ENCODE measurements at regions of chr2 and their contacts with region 1.

Region 1: GRCh38 chr2:191555092-191555742 is 122.7 kb upstream of the NABP1 start:
- DNase-seq: peak; percentile 88
- H3K4me3 Mint-ChIP-seq: no peak overlapping the region
- H3K27ac Mint-ChIP-seq: no peak overlapping the region
- H3K4me1 Mint-ChIP-seq: peaks cover 2% of the 10 kb centered on the region
- H3K27me3 Mint-ChIP-seq: peaks cover 20% of the 10 kb centered on the region

Region 2: DNA sequence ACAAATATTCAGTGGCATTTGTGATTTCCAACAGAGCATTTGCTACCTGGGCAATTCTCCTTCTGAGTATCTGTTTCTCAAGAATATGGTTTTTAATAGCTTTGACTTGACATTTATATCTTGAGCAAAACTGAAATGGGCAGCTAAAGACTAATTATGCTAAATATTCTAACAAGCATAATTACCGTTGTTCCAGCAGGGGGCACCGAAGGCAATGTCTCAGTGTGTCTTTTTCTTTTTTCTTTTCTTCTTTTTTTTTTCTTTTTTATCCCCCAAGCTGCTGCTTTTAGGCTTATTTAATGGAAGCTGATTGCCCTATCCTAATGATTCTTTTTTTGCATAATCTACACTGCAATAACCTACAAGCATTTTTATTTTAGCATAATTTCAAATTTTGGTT is 16.1 kb before region 1 on chr2:
- CTCF ChIA-PET with region 1: interaction called, 13 read pairs
- DNase-seq: peak; percentile 59
- H3K4me3 Mint-ChIP-seq: no peak overlapping the region
- H3K27ac Mint-ChIP-seq: no peak overlapping the region
- H3K4me1 Mint-ChIP-seq: no peaks in the 10 kb centered on the region
- H3K27me3 Mint-ChIP-seq: peaks cover 9% of the 10 kb centered on the region

Region 3: GRCh38 chr2:191566344-191566743 is 11.1 kb after region 1 on chr2:
- CTCF ChIA-PET with region 1: interaction called, 12 read pairs
- DNase-seq: peak; percentile 77
- H3K4me3 Mint-ChIP-seq: no peak overlapping the region
- H3K27ac Mint-ChIP-seq: no peak overlapping the region
- H3K4me1 Mint-ChIP-seq: peaks cover 49% of the 10 kb centered on the region
- H3K27me3 Mint-ChIP-seq: peaks cover 60% of the 10 kb centered on the region

Region 4: DNA sequence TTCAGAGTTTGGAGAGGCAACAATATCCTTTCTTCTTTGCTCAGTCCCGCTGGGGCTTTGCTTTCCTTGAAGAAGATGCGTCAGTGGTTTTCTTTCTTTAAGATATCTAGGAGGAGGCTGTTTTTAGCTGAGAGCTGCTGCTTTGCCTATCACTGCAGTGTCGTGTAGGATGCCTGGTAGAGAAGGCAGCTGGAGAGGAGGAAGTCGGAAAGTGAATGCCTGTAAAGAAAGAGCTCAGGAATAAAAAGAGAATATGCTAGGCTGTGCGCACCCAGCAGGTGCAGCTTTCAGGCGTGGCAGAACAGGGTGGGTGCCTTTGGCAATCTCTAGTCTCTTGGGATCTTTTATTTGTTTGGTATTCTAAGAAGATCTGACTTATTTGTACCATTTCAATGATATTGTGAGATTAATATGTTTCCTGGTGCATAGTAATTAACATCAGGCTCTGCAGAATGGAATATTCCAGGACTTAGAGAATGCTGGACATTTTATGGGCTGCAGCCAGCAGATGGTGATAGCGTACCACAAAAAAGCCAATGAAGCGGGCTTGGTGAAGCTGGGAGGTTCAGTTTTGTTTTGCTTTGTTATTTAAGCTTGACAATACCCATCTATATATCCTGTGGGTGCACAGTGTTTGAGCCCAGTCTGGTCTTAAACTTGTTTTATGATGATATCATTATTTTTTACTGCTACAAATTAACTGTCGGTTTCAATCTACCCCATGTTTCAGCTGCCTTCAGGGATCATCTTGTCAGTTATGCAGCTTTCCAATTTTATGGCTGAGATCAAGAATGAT is 256.8 kb after region 1 on chr2:
- CTCF ChIA-PET with region 1: interaction called, 14 read pairs
- DNase-seq: peak; percentile 42
- H3K4me3 Mint-ChIP-seq: no peak overlapping the region
- H3K27ac Mint-ChIP-seq: no peak overlapping the region
- H3K4me1 Mint-ChIP-seq: no peaks in the 10 kb centered on the region
- H3K27me3 Mint-ChIP-seq: peaks cover 21% of the 10 kb centered on the region

Region 5: GRCh38 chr2:192162392-192163042 is 607.3 kb after region 1 on chr2:
- CTCF ChIA-PET with region 1: interaction called, 103 read pairs
- DNase-seq: peak; percentile 70
- H3K4me3 Mint-ChIP-seq: no peak overlapping the region
- H3K27ac Mint-ChIP-seq: no peak overlapping the region
- H3K4me1 Mint-ChIP-seq: peaks cover 5% of the 10 kb centered on the region
- H3K27me3 Mint-ChIP-seq: no peaks in the 10 kb centered on the region

Measured in activated naive CD4-positive, alpha-beta T cell treated with anti-CD3 and anti-CD28 coated beads, Interleukin-2, amount 10 ng/mL, durations not matched to agents 7 days and 5 days (primary cell).